ENCODE measurements at regions of chr4 and their contacts with region 1.

Region 1: DNA sequence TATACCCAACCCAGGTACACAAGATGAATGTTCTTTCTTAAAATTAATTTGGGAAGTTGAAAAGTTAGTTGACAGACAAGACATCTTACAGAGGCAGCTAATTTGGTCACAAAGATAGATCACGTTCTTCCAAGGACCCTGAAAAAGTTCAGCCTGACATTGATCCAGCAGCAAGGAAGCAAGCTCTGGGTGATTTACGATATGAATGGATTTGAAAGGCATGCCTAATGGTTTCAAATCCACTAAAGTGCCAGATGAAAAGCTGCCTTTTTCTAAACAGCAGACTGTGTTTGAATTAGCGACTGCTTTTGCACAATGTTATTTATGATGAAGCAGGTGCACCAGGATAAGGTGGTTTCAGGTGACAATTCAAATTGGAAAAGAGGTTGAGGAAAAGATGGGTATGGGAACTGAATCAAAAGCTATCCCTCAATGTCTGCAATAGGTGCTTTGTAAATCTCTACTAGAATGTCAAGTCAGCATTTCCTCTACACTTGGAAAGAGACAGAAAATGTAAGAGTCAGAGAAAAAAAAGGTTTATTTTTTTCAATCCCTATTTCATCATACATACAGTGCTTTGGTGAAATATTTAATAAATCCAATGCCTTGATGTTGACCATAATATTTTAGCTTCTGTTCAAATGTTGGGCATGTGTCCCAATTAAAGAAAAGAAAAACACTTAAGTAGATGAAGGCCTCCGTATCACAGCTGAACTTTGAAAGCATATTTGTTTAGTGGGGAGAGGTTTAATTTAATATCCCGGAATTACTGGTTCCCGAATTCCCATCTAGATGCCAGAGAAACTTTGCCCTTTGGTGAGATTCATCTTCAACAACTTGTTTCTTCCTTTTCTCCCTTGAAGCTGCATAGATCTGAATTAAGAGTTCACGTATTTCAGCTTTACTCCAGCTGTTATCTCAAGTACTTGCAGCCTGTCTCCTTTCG is 6.0 kb downstream of the RASGEF1B start:
- DNase-seq: no peak
- ATAC-seq: no peak
- H3K4me3 ChIP-seq: no peak overlapping the region
- H3K4me3 Mint-ChIP-seq: no peak overlapping the region
- H3K27ac ChIP-seq: no peak overlapping the region
- H3K27ac Mint-ChIP-seq: no peak overlapping the region
- H3K4me1 ChIP-seq: peaks cover 8 to 35% of the 10 kb centered on the region in 2 experiments
- H3K4me1 Mint-ChIP-seq: peaks cover 48 to 68% (median 54%) of the 10 kb centered on the region in 3 donors
- H3K27me3 ChIP-seq: no peaks in the 10 kb centered on the region
- H3K27me3 Mint-ChIP-seq: no peaks in the 10 kb centered on the region

Region 2: GRCh38 chr4:81432825-81433224 is 32.8 kb before region 1 on chr4:
- CTCF ChIA-PET with region 1: no interaction called
- POLR2A ChIA-PET with region 1: no interaction called
- DNase-seq: no peak
- ATAC-seq: no peak
- H3K4me3 ChIP-seq: no peak overlapping the region
- H3K4me3 Mint-ChIP-seq: no peak overlapping the region
- H3K27ac ChIP-seq: no peak overlapping the region
- H3K27ac Mint-ChIP-seq: no peak overlapping the region
- H3K4me1 ChIP-seq: no peaks in the 10 kb centered on the region
- H3K4me1 Mint-ChIP-seq: peaks cover 0 to 2% (median 2%) of the 10 kb centered on the region in 3 donors
- H3K27me3 ChIP-seq: no peaks in the 10 kb centered on the region
- H3K27me3 Mint-ChIP-seq: no peaks in the 10 kb centered on the region

Region 3: DNA sequence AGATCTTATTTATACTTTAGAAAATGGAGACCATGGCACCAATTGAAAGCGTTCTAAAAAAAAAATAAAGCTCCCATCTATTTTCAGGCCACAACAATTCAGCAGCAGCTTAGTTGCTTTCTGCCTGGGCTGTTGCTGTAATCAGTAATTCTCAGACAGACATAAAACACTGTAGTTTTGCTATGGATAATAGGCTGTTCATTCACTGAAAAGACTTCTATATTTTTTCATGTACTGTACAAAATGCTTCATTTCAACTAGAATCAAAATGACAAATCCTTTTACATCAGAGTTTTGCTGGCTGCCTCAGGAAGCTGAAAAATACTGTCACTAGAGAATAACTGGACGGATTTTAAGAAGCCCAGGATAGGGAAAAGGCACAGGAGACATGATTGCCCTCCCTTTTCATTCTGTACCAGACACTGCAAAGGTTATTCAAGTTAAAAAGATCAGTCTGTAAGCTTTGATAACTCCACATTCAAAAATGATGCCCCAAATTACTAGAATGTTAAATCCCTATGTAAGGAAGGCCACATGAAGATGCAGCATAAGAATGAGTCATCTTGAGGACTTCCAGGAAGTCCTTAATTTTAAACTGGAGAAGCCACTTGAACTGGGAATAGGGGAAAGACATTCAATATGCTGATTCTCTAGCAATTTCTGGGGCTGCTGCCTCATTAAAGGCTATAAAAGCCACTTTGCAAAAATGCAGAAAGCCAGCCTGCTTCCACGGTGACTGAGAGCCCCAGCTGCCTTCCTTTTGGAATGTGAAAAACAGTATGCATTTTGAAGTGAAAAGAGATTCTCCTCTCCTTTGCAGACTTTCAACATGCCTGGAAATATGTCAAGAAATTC is 409.2 kb after region 1 on chr4:
- CTCF ChIA-PET with region 1: interaction called in 1 of 2 experiments, 10 read pairs
- POLR2A ChIA-PET with region 1: no interaction called
- DNase-seq: no peak
- ATAC-seq: no peak
- H3K4me3 ChIP-seq: no peak overlapping the region
- H3K4me3 Mint-ChIP-seq: no peak overlapping the region
- H3K27ac ChIP-seq: no peak overlapping the region
- H3K27ac Mint-ChIP-seq: no peak overlapping the region
- H3K4me1 ChIP-seq: no peaks in the 10 kb centered on the region
- H3K4me1 Mint-ChIP-seq: no peaks in the 10 kb centered on the region
- H3K27me3 ChIP-seq: peaks cover 0 to 5% of the 10 kb centered on the region in 2 experiments
- H3K27me3 Mint-ChIP-seq: peaks cover 0 to 4% of the 10 kb centered on the region in 2 donors

Measured in T-cell (primary cell).